Ascending aorta (tissue), 2 donors: ENCODE measurements at regions of chr4 and their contacts with region 1.

Region 1: DNA sequence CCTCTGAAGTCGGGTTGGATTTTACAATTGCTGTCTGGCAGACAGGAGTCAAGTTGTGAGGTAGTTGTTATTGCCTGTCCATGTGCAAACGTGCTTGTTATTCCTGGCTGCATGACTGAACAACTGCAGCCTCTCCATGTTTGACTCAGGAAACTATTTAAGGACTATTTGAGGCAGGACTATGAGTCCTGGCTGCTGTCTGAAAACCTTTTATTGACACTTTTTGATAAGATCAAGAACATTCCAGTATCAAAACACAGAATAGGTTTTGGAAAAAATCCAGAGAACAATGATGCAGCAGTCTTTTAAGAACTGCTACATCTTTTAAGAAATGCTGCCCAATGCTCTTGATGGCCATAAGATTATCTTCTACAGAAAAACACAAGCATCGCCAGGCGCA is 10.0 kb upstream of the SPRY1 start:
- DNase-seq: no peak
- H3K4me3 ChIP-seq: no peak overlapping the region
- H3K27ac ChIP-seq: peak overlapping the region; percentile 59 to 63
- H3K4me1 ChIP-seq: peaks cover 0 to 18% of the 10 kb centered on the region in 2 donors
- H3K27me3 ChIP-seq: no peaks in the 10 kb centered on the region
- CTCF ChIP-seq: no peak

Region 2: GRCh38 chr4:123083646-123084045 is 303.0 kb before region 1 on chr4:
- intact Hi-C with region 1: no loop called
- DNase-seq: no peak
- H3K4me3 ChIP-seq: no peak overlapping the region
- H3K27ac ChIP-seq: no peak overlapping the region
- H3K4me1 ChIP-seq: no peaks in the 10 kb centered on the region
- H3K27me3 ChIP-seq: no peaks in the 10 kb centered on the region
- CTCF ChIP-seq: no peak

Region 3: GRCh38 chr4:123217664-123218063 is 168.9 kb before region 1 on chr4:
- intact Hi-C with region 1: loop called (anchors 5 kb)
- DNase-seq: no peak
- H3K4me3 ChIP-seq: no peak overlapping the region
- H3K27ac ChIP-seq: peak overlapping the region in 1 of 2 donors; percentile 30
- H3K4me1 ChIP-seq: peaks cover 0 to 5% of the 10 kb centered on the region in 2 donors
- H3K27me3 ChIP-seq: no peaks in the 10 kb centered on the region
- CTCF ChIP-seq: no peak